Activated CD4-positive, alpha-beta T cell treated with anti-CD3 and anti-CD28 coated beads, Interleukin-2, amount 10 ng/mL, durations not matched to agents 24 days and 14 days (primary cell): ENCODE measurements at regions of chr4 and their contacts with region 1.

Region 1: GRCh38 chr4:122617597-122618593 is 3.0 kb downstream of the IL21 start:
- DNase-seq: peak; percentile 58
- H3K4me3 Mint-ChIP-seq: peak overlapping the region; percentile 89
- H3K27ac Mint-ChIP-seq: peak overlapping the region; percentile 91
- H3K4me1 Mint-ChIP-seq: peaks cover 50% of the 10 kb centered on the region
- H3K27me3 Mint-ChIP-seq: no peaks in the 10 kb centered on the region

Region 2: GRCh38 chr4:122584519-122584918 is 33.4 kb before region 1 on chr4:
- intact Hi-C with region 1: loop called (anchors 1 kb)
- DNase-seq: peak; percentile 81
- H3K4me3 Mint-ChIP-seq: peak overlapping the region; percentile 64
- H3K27ac Mint-ChIP-seq: peak overlapping the region; percentile 95
- H3K4me1 Mint-ChIP-seq: peaks cover 53% of the 10 kb centered on the region
- H3K27me3 Mint-ChIP-seq: no peaks in the 10 kb centered on the region

Region 3: GRCh38 chr4:122632396-122633143 is 14.7 kb after region 1 on chr4:
- intact Hi-C with region 1: loop called (anchors 1 kb)
- DNase-seq: no peak
- H3K4me3 Mint-ChIP-seq: peak overlapping the region; percentile 12
- H3K27ac Mint-ChIP-seq: peak overlapping the region; percentile 74
- H3K4me1 Mint-ChIP-seq: peaks cover 26% of the 10 kb centered on the region
- H3K27me3 Mint-ChIP-seq: no peaks in the 10 kb centered on the region

Region 4: DNA sequence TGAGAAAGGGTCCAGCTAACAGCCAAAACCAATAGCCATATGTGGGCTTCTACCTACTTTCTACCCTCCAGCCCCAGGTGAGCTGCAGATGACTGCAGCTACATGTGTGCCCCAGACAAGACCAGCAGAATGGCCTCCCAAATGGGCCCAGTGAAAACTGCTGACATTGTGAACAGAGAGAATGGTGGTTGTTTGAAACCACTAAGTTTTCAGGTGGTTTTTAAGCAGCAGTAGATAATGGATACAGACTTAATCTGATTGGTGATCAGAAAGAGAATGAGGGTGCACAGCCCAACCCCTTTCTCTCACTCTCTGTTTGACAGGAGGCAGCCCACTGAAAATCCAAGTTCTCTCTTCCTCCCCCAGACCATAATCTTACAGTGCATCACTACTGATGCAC is 72.1 kb after region 1 on chr4:
- intact Hi-C with region 1: loop called (anchors 1 kb)
- DNase-seq: peak; percentile 80
- H3K4me3 Mint-ChIP-seq: peak overlapping the region; percentile 13
- H3K27ac Mint-ChIP-seq: peak overlapping the region; percentile 95
- H3K4me1 Mint-ChIP-seq: peaks cover 52% of the 10 kb centered on the region
- H3K27me3 Mint-ChIP-seq: no peaks in the 10 kb centered on the region

Region 5: GRCh38 chr4:123415977-123416376 is 798.1 kb after region 1 on chr4:
- intact Hi-C with region 1: no loop called
- DNase-seq: peak; percentile 88
- H3K4me3 Mint-ChIP-seq: peak overlapping the region; percentile 8
- H3K27ac Mint-ChIP-seq: peak overlapping the region; percentile 99
- H3K4me1 Mint-ChIP-seq: peaks cover 70% of the 10 kb centered on the region
- H3K27me3 Mint-ChIP-seq: no peaks in the 10 kb centered on the region